ENCODE measurements at regions of chr10 and their contacts with region 1.

Region 1: GRCh38 chr10:110007701-110008517 is at the start of gene ADD3:
- DNase-seq: peak; percentile 95
- ATAC-seq: peak; percentile 86
- H3K4me3 ChIP-seq: peak within 1 kb of the TSS; percentile 73 to 95 (median 76)
- H3K4me3 Mint-ChIP-seq: no peak within 1 kb of the TSS
- H3K27ac ChIP-seq: peak within 1 kb of the TSS; percentile 72 to 91
- H3K27ac Mint-ChIP-seq: no peak within 1 kb of the TSS
- H3K4me1 ChIP-seq: peaks cover 33 to 40% of the 10 kb centered on the region in 2 donors
- H3K4me1 Mint-ChIP-seq: peaks cover 49% of the 10 kb centered on the region
- H3K27me3 ChIP-seq: no peaks in the 10 kb centered on the region
- H3K27me3 Mint-ChIP-seq: no peaks in the 10 kb centered on the region
- CTCF ChIP-seq: no peak
- total RNA-seq, gene ADD3: 156 and 191 TPM in 2 replicates

Region 2: DNA sequence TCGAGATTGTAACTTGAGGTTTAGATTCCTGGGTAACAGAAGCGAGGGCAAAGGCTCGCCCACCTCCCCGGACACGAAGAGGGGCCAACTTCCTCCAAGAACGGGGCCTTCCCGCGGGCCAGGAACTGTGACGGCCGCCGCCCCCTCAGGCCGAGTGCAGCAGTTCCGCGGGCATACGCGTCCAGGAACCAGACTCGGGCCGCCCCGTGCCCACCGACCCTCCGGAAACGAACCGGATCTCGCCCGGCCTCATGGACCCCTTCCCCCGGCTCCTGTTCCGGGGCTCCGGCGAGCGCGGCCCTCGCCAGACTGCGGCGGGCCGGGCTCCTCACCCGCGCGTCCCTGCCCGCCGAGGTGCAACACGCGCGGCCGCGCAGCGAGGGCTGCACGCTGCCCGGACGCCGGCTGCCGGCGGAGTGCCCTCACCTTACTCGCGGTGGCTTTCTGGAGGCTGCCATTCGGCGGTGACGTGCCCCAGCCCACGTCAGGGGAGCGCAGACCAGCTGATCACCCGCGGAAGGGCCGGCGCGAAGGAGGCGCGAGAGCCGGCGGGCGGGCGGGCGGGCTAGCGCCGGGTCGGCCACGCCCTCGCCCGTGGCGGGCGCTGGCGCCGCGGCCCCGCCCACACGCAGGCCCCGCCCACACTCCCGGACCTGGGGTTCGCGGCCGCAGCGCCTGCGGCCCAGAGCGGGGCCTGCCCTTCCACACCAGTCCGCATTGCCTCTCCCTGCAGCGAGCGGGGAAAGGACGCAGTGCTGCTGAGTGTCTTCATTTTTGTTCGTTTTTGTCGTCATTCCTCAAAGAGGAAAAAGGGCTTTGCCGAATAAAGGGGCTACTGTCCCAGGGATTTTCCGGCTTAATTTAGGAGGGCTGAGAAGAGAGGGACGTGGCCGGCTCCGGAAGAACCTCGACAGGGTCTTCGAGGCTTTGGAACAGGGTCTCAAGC is 84.7 kb before region 1 on chr10 and contains the start of gene XPNPEP1:
- CTCF ChIA-PET with region 1: interaction called, 3 read pairs
- POLR2A ChIA-PET with region 1: no interaction called
- intact Hi-C with region 1: loop called (anchors 1 kb)
- DNase-seq: peak; percentile 92
- ATAC-seq: peak; percentile 96
- H3K4me3 ChIP-seq: peak within 1 kb of the TSS; percentile 55 to 91 (median 75)
- H3K4me3 Mint-ChIP-seq: peak within 1 kb of the TSS; percentile 90
- H3K27ac ChIP-seq: peak within 1 kb of the TSS; percentile 60 to 81
- H3K27ac Mint-ChIP-seq: peak within 1 kb of the TSS; percentile 88
- H3K4me1 ChIP-seq: peaks cover 18 to 23% of the 10 kb centered on the region in 2 donors
- H3K4me1 Mint-ChIP-seq: peaks cover 39% of the 10 kb centered on the region
- H3K27me3 ChIP-seq: no peaks in the 10 kb centered on the region
- H3K27me3 Mint-ChIP-seq: no peaks in the 10 kb centered on the region
- CTCF ChIP-seq: no peak
- total RNA-seq, gene XPNPEP1: 56.1 and 60.6 TPM in 2 replicates

Region 3: DNA sequence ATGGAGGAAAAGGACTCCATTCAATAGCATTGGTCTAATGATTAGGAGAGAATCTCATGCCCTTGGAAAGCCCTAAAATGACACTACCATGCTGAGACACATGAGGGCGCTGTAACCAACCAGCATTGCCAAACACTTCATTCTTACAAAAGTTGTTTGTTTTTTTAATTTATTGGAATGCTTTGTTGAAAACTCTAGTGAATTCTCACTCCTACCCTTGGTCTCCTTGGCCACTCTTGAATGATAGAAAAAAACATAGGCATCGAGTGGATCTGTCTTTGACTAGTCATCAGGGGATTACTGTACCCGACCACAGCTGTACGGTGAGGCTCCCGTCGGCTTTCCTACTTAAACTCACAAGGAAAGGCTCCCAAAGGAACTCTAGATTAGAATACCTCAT is 29.4 kb before region 1 on chr10:
- CTCF ChIA-PET with region 1: interaction called, 5 read pairs
- POLR2A ChIA-PET with region 1: no interaction called
- intact Hi-C with region 1: loop called (anchors 1 kb)
- DNase-seq: peak; percentile 68
- ATAC-seq: no peak
- H3K4me3 ChIP-seq: no peak overlapping the region
- H3K4me3 Mint-ChIP-seq: no peak overlapping the region
- H3K27ac ChIP-seq: no peak overlapping the region
- H3K27ac Mint-ChIP-seq: no peak overlapping the region
- H3K4me1 ChIP-seq: no peaks in the 10 kb centered on the region
- H3K4me1 Mint-ChIP-seq: no peaks in the 10 kb centered on the region
- H3K27me3 ChIP-seq: no peaks in the 10 kb centered on the region
- H3K27me3 Mint-ChIP-seq: no peaks in the 10 kb centered on the region
- CTCF ChIP-seq: peak; percentile 90

Region 4: DNA sequence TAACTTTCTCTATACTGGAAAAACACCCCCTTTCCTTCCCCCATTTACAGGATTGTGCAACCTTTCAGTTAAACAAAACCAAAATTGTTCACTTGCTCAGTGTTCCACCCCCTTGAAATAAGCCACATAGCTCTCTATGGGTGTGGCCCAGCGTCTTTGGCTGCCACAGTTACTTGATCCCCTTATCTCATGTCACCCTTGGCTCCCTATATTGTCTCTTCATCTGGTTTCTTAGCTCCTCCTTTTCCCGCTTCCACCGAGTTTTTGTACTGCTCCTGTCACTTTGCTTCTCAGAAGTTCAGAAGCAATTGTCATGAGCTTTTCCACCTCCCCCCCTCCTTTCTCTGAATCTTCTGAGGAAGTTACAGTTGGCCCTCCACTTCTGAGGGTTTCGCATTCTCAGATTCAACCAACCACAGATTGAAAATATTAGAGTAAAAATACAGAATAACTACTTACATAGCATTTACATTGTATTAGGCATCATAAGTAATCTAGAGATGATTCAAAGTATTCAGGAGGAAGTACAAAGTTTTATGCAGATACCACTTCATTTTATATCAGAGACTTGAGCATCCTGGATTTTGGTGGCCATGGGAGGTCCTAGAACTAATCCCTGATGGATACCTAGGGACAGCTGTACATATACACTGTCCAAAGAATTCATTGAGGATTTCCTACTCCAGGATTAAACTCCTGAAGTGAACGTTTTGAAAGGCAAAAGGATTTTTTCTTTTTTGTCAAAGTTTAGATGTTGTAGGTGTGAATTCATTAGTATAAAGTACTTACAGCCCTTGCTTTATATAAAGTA is 60.3 kb after region 1 on chr10:
- CTCF ChIA-PET with region 1: interaction called, 3 read pairs
- POLR2A ChIA-PET with region 1: interaction called, 4 read pairs
- intact Hi-C with region 1: loop called (anchors 1 kb)
- DNase-seq: peak; percentile 64
- ATAC-seq: peak; percentile 60
- H3K4me3 ChIP-seq: peak overlapping the region in 3 of 5 experiments; percentile 3 to 55 (median 4)
- H3K4me3 Mint-ChIP-seq: peak overlapping the region; percentile 80
- H3K27ac ChIP-seq: peak overlapping the region; percentile 81 to 84
- H3K27ac Mint-ChIP-seq: peak overlapping the region; percentile 96
- H3K4me1 ChIP-seq: peaks cover 64 to 77% of the 10 kb centered on the region in 2 donors
- H3K4me1 Mint-ChIP-seq: peaks cover 77% of the 10 kb centered on the region
- H3K27me3 ChIP-seq: no peaks in the 10 kb centered on the region
- H3K27me3 Mint-ChIP-seq: no peaks in the 10 kb centered on the region
- CTCF ChIP-seq: no peak

Region 5: DNA sequence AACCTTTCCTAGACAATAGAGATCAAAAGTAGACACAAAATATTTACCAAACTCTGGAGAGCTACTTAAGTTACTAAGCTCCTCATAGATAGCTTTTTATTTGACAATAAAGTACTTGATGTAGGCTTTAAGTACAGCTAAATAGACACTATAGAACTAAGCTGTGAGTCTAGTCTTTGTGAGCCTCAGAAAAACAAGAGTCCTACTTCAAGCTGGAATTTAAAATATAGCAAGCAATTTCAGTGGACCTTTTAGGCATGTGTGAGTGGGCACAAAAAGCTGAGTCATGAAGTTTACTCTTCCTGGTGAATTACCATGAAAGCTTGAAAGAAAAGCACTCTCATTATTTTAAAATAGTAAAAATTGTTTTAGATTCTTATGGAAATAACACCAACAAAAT is 76.0 kb after region 1 on chr10:
- CTCF ChIA-PET with region 1: no interaction called
- POLR2A ChIA-PET with region 1: no interaction called
- intact Hi-C with region 1: no loop called
- DNase-seq: no peak
- ATAC-seq: no peak
- H3K4me3 ChIP-seq: no peak overlapping the region
- H3K4me3 Mint-ChIP-seq: no peak overlapping the region
- H3K27ac ChIP-seq: peak overlapping the region in 1 of 2 donors; percentile 75
- H3K27ac Mint-ChIP-seq: peak overlapping the region; percentile 17
- H3K4me1 ChIP-seq: peaks cover 34 to 42% of the 10 kb centered on the region in 2 donors
- H3K4me1 Mint-ChIP-seq: peaks cover 76% of the 10 kb centered on the region
- H3K27me3 ChIP-seq: no peaks in the 10 kb centered on the region
- H3K27me3 Mint-ChIP-seq: no peaks in the 10 kb centered on the region
- CTCF ChIP-seq: no peak

Region 6: DNA sequence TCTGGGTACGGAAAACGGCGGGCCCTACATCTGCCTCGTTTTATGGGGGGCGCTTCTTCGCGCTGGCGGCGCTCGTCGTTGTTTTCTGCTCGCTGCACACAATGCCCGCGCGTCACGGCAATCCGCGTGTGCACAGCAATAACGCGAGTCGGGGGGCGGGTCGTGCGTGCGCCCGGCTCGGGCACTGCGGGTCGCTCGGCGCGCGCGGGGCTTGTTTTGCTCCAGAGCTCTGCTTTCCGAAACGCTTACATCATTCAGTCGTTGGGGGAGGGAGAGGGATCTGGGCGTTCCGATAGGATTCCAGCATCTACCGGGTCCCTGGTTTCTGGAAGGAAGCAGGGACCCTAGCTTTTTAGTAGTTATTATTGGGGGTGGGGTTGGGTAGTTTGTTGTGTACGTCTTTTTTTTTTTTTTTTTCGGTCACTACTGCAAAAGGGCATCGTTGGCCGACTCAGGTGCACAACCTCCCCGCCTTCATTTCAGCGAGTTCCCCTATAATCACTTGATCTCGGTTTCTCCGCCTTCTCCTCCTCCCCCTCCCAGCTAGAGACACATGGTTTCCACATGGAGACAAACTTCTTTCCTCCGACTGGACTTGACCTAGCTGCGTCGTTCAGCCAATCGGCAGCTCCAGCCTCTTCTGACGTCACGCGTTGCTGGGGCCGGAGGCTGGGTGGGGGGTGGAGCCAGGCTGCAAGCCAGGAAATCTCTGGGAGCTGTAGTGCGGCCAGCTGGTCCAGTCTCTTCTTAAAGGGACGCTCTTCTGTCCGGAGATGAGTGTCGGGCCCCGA is 203.0 kb after region 1 on chr10:
- CTCF ChIA-PET with region 1: interaction called, 3 read pairs
- POLR2A ChIA-PET with region 1: interaction called, 5 read pairs
- intact Hi-C with region 1: loop called (anchors 5 kb)
- DNase-seq: peak; percentile 94
- ATAC-seq: peak; percentile 68
- H3K4me3 ChIP-seq: peak overlapping the region; percentile 67 to 90 (median 82)
- H3K4me3 Mint-ChIP-seq: peak overlapping the region; percentile 88
- H3K27ac ChIP-seq: peak overlapping the region; percentile 82 to 85
- H3K27ac Mint-ChIP-seq: peak overlapping the region; percentile 97
- H3K4me1 ChIP-seq: peaks cover 44 to 67% of the 10 kb centered on the region in 2 donors
- H3K4me1 Mint-ChIP-seq: peaks cover 58% of the 10 kb centered on the region
- H3K27me3 ChIP-seq: peaks cover 0 to 18% (median 7%) of the 10 kb centered on the region in 4 experiments
- H3K27me3 Mint-ChIP-seq: peaks cover 4% of the 10 kb centered on the region
- CTCF ChIP-seq: no peak

Region 7: DNA sequence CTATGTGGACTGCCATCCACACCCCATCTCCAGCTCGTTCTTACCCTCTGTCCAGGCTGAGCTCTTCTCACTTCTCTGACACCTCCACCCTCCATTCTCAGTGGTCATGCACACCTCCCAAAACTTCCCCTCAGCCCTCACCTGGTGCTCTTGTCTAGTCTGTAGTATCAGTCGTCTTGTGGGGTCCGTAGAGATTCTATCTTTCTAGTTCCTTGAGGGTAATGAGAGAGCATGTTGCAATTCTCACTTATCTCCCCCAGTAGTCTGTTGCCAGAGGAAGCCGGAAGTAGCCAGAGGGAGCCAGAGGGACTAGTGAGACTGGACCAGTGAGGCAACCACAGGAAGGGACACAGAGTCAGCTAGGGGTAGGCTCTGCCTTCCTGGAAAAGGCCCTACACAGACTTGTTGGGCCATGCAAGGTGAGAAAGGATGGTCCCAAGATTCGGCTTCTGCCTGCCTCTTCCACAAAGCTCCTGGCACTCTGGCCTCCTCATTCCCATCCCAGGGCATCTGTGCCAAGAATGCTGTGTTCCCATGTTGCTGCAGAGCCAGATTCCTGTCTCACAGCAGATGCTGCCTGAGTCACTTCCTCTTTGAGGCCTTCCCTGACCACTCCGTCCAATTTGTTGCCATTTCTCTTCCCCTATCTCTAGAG is 439.2 kb after region 1 on chr10:
- CTCF ChIA-PET with region 1: no interaction called
- POLR2A ChIA-PET with region 1: no interaction called
- intact Hi-C with region 1: no loop called
- DNase-seq: no peak
- ATAC-seq: no peak
- H3K4me3 ChIP-seq: no peak overlapping the region
- H3K4me3 Mint-ChIP-seq: no peak overlapping the region
- H3K27ac ChIP-seq: no peak overlapping the region
- H3K27ac Mint-ChIP-seq: no peak overlapping the region
- H3K4me1 ChIP-seq: peaks cover under 1 to 1% of the 10 kb centered on the region in 2 donors
- H3K4me1 Mint-ChIP-seq: peaks cover 4% of the 10 kb centered on the region
- H3K27me3 ChIP-seq: peaks cover 0 to 9% (median 2%) of the 10 kb centered on the region in 4 experiments
- H3K27me3 Mint-ChIP-seq: peaks cover 13% of the 10 kb centered on the region
- CTCF ChIP-seq: no peak

Region 8: DNA sequence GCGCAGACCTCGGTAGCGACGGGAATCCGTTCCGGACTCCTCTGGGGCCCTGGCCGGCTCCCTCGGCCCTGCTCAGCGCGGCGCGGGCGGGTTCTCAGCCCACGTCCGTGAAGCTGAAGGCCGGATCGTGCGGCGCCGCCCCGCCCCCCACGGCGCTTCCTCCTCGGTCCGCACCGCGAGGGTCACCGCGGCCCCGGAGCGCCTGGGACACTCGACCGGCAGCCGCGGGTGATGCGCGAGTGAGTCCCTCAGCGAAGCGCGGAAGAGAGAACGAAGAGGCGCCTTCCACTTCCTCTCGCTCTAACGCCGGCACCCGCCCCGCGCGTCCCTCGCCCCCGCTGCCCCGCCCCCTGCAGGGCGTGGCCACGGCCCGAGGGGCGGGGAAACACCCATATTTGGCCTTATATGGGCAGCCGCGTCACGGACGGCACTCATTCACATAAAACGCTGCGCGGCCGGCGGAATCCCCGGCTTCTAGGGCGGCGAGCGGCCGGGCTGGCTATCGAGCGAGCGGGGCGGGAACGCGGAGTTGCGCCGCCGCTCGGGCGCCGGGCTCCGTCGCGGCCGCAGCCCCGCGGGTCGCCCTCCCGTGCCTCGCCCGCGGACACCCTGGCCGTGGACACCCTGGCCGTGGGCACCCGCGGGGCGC is 489.7 kb after region 1 on chr10 and contains the start of gene DUSP5:
- CTCF ChIA-PET with region 1: no interaction called
- POLR2A ChIA-PET with region 1: no interaction called
- intact Hi-C with region 1: loop called (anchors 1 kb)
- DNase-seq: peak; percentile 99
- ATAC-seq: peak; percentile 91
- H3K4me3 ChIP-seq: peak within 1 kb of the TSS in 4 of 5 experiments; percentile 57 to 71 (median 62)
- H3K4me3 Mint-ChIP-seq: peak within 1 kb of the TSS; percentile 93
- H3K27ac ChIP-seq: peak within 1 kb of the TSS; percentile 65 to 80
- H3K27ac Mint-ChIP-seq: peak within 1 kb of the TSS; percentile 93
- H3K4me1 ChIP-seq: peaks cover 35 to 51% of the 10 kb centered on the region in 2 donors
- H3K4me1 Mint-ChIP-seq: peaks cover 56% of the 10 kb centered on the region
- H3K27me3 ChIP-seq: peaks cover 0 to 14% (median 2%) of the 10 kb centered on the region in 4 experiments
- H3K27me3 Mint-ChIP-seq: peaks cover 6% of the 10 kb centered on the region
- CTCF ChIP-seq: no peak
- total RNA-seq, gene DUSP5: 10.0 and 10.8 TPM in 2 replicates

Region 9: GRCh38 chr10:110864662-110865140 is 856.8 kb after region 1 on chr10:
- CTCF ChIA-PET with region 1: no interaction called
- POLR2A ChIA-PET with region 1: no interaction called
- intact Hi-C with region 1: loop called (anchors 5 kb)
- DNase-seq: peak; percentile 89
- ATAC-seq: peak; percentile 55
- H3K4me3 ChIP-seq: peak overlapping the region in 4 of 5 experiments; percentile 21 to 60 (median 38)
- H3K4me3 Mint-ChIP-seq: peak overlapping the region; percentile 85
- H3K27ac ChIP-seq: peak overlapping the region; percentile 94 to 96
- H3K27ac Mint-ChIP-seq: peak overlapping the region; percentile 97
- H3K4me1 ChIP-seq: peaks cover 97 to 100% of the 10 kb centered on the region in 2 donors
- H3K4me1 Mint-ChIP-seq: peaks cover 97% of the 10 kb centered on the region
- H3K27me3 ChIP-seq: no peaks in the 10 kb centered on the region
- H3K27me3 Mint-ChIP-seq: no peaks in the 10 kb centered on the region
- CTCF ChIP-seq: no peak

Measured in B cell (primary cell).